CD14-positive monocyte (primary cell): ENCODE measurements at regions of chr9 and their contacts with region 1.

Region 1: GRCh38 chr9:97615439-97616072 is 17.6 kb downstream of the TSTD2 start:
- DNase-seq: peak; percentile 39 to 63 (median 58)
- H3K4me3 ChIP-seq: no peak overlapping the region
- H3K4me3 Mint-ChIP-seq: no peak overlapping the region
- H3K27ac ChIP-seq: no peak overlapping the region
- H3K27ac Mint-ChIP-seq: no peak overlapping the region
- H3K4me1 ChIP-seq: no peaks in the 10 kb centered on the region
- H3K4me1 Mint-ChIP-seq: peaks cover 3% of the 10 kb centered on the region
- H3K27me3 ChIP-seq: no peaks in the 10 kb centered on the region
- H3K27me3 Mint-ChIP-seq: peaks cover 0 to 2% (median 0%) of the 10 kb centered on the region in 3 donors
- CTCF ChIP-seq: peak; percentile 83

Region 2: DNA sequence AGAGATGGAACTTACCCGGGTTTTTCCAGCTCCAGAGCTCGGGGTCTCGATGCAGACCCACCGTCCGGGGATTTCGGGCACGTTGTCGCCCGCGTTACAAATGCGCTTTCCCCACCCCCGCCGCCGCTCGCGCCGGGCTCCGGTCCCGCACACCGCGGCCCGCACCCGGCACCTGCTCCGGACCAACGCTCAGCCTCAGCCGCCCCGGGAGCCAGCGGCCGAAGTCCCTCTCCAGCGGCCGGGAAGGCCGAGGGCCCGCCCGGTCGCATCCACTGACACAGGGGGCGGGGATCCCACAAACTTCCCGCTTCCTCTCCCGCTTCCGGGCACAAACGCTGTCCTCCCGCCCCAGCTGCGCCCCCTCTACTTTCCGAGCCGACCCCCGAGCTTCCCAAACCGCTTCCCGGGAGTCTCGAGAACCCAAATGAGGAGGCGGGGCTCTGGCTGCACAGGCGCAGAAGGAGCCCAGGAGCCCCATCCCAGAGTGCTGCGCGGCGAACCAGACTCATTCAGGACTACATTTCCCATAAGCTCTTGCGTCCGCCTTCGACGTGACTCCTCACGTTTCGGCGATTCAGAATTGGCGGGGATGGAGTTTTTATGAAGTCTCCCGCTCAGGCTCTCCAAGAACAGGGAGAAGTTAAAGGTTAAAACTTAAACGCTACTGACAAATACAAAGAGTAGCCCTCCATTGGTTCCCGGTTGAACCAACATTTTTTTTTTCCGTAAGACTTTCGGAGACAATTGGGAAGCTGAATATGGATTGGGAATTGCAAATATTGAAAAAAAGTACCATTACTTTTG is 761.3 kb before region 1 on chr9 and contains the start of gene ZNF782:
- intact Hi-C with region 1: loop called (anchors 2 to 10 kb)
- DNase-seq: peak; percentile 80 to 89 (median 87)
- H3K4me3 ChIP-seq: peak within 1 kb of the TSS; percentile 85 to 97 (median 88)
- H3K4me3 Mint-ChIP-seq: peak within 1 kb of the TSS; percentile 100
- H3K27ac ChIP-seq: peak within 1 kb of the TSS in 1 of 2 donors; percentile 52
- H3K27ac Mint-ChIP-seq: peak within 1 kb of the TSS; percentile 86 to 98 (median 93)
- H3K4me1 ChIP-seq: peaks cover 17 to 20% of the 10 kb centered on the region in 2 donors
- H3K4me1 Mint-ChIP-seq: peaks cover 27% of the 10 kb centered on the region
- H3K27me3 ChIP-seq: peaks cover 3 to 6% of the 10 kb centered on the region in 2 donors
- H3K27me3 Mint-ChIP-seq: peaks cover 7 to 12% (median 10%) of the 10 kb centered on the region in 3 donors
- CTCF ChIP-seq: no peak
- polyA plus RNA-seq, gene ZNF782: 1.1 to 1.3 (median 1.1) TPM

Region 3: DNA sequence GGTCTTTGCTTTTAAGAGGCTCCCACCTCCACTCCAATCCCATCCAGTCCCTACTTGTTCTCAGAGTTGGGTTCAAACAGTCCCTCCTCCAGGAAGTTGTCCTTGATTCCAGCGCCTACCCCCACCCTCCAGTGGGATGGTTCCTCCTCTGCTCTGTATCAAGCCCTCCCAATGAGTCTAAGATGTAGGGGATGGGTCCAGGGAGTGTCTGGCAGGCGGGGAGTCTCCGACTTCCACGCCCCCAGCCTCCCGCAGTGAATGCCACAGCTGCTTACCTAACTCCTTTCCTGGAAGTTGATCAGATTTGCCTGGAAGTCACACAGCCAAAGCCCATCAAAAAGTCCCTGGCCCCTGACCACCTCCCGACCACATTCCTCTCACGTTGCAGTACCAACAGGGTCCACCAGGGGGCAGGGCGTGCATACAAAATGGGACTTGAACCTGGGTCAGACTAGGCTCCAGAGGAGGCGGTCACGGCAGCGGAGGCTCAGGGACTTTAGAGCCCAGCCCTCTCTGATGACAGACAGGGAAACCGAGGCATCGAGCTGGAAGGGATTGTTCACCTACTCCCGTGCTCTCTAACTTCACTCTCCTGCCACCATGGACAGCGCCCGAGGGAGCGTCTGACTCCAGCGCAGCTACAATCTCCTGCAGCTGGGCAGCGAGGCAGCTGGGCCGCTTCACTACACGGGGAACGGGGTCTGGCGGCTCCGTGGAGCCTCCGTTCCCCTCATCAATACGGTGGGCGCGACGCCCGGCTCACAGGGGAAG is 228.6 kb before region 1 on chr9:
- intact Hi-C with region 1: loop called in 1 of 2 experiments (anchors 10 kb)
- DNase-seq: peak; percentile 52 to 78 (median 56)
- H3K4me3 ChIP-seq: no peak overlapping the region
- H3K4me3 Mint-ChIP-seq: peak overlapping the region in 1 of 2 donors; percentile 31
- H3K27ac ChIP-seq: no peak overlapping the region
- H3K27ac Mint-ChIP-seq: peak overlapping the region in 2 of 7 donors; percentile 12 to 36
- H3K4me1 ChIP-seq: peaks cover 17 to 23% of the 10 kb centered on the region in 2 donors
- H3K4me1 Mint-ChIP-seq: peaks cover 19% of the 10 kb centered on the region
- H3K27me3 ChIP-seq: no peaks in the 10 kb centered on the region
- H3K27me3 Mint-ChIP-seq: peaks cover 3 to 15% (median 7%) of the 10 kb centered on the region in 3 donors
- CTCF ChIP-seq: peak; percentile 99

Region 4: DNA sequence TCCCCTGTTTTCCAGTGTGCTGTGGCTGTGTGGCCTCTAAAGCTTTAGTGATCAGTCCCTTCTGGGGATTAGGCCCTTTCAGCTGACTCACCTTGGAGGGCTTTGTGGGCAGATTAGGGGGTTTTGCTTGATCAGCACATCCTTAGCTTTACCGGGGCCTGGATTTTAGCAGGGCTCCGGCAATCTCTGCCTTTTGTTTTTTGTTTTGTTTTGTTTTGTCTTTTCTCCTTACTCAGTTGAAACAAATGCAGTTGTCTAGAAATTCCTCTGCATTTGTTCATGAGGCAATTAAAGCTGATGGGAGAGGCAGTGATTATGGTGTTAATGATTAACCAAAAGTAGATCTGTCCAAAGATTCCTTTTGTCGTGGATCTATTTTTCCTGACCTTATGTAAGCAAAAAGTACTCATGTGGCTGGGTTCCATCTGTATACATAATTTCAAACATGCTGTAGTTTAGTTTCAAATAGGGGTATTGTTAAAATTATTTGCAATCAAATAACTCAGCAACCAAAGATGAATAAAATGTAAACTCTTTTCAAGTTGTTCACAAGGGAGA is 208.9 kb before region 1 on chr9:
- intact Hi-C with region 1: loop called (anchors 1 to 5 kb)
- DNase-seq: no peak
- H3K4me3 ChIP-seq: no peak overlapping the region
- H3K4me3 Mint-ChIP-seq: no peak overlapping the region
- H3K27ac ChIP-seq: no peak overlapping the region
- H3K27ac Mint-ChIP-seq: peak overlapping the region in 1 of 7 donors; percentile 16
- H3K4me1 ChIP-seq: peaks cover 3 to 5% of the 10 kb centered on the region in 2 donors
- H3K4me1 Mint-ChIP-seq: peaks cover 13% of the 10 kb centered on the region
- H3K27me3 ChIP-seq: no peaks in the 10 kb centered on the region
- H3K27me3 Mint-ChIP-seq: peaks cover 0 to 8% (median 2%) of the 10 kb centered on the region in 3 donors
- CTCF ChIP-seq: no peak

Region 5: GRCh38 chr9:97411789-97412625 is 203.5 kb before region 1 on chr9 and contains the start of gene TDRD7:
- intact Hi-C with region 1: loop called (anchors 1 to 5 kb)
- DNase-seq: peak; percentile 89 to 92 (median 89)
- H3K4me3 ChIP-seq: peak within 1 kb of the TSS; percentile 83 to 94 (median 87)
- H3K4me3 Mint-ChIP-seq: peak within 1 kb of the TSS; percentile 88 to 90
- H3K27ac ChIP-seq: peak within 1 kb of the TSS; percentile 83 to 85
- H3K27ac Mint-ChIP-seq: peak within 1 kb of the TSS; percentile 76 to 94 (median 85)
- H3K4me1 ChIP-seq: peaks cover 27 to 35% of the 10 kb centered on the region in 2 donors
- H3K4me1 Mint-ChIP-seq: peaks cover 50% of the 10 kb centered on the region
- H3K27me3 ChIP-seq: no peaks in the 10 kb centered on the region
- H3K27me3 Mint-ChIP-seq: peaks cover 0 to 2% (median 0%) of the 10 kb centered on the region in 3 donors
- CTCF ChIP-seq: peak; percentile 100
- polyA plus RNA-seq, gene TDRD7: 8.1 to 12.0 (median 11.1) TPM

Region 6: GRCh38 chr9:97468658-97469448 is 146.7 kb before region 1 on chr9:
- intact Hi-C with region 1: loop called in 1 of 2 experiments (anchors 5 kb)
- DNase-seq: peak; percentile 9 to 38 (median 25)
- H3K4me3 ChIP-seq: no peak overlapping the region
- H3K4me3 Mint-ChIP-seq: no peak overlapping the region
- H3K27ac ChIP-seq: peak overlapping the region in 1 of 2 donors; percentile 12
- H3K27ac Mint-ChIP-seq: peak overlapping the region in 4 of 7 donors; percentile 2 to 63 (median 26)
- H3K4me1 ChIP-seq: no peaks in the 10 kb centered on the region
- H3K4me1 Mint-ChIP-seq: no peaks in the 10 kb centered on the region
- H3K27me3 ChIP-seq: no peaks in the 10 kb centered on the region
- H3K27me3 Mint-ChIP-seq: no peaks in the 10 kb centered on the region
- CTCF ChIP-seq: peak; percentile 46